OCI-LY7 (cell line): ENCODE measurements at regions of chr1 and their contacts with region 1.

Region 1: DNA sequence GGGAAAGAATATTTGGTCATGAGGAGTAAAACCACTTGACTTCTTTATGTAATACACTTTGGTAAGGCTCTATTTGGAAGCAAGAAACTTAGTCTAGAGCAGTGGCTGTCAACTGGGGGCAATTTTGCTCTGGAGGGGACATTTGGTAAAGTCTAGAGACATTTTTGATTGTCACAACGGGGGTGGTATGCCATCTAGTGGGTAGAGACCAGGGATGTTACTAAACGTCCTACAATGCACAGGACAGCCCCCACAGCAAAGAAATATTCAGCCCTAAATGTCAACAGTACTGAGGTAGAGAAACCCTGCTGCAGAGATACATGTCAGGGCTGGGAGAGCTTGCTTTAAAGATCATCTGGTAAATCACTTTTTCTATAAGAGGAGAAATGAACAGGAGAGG is 13.5 kb downstream of the FUCA1 start:
- DNase-seq: peak; percentile 54
- H3K4me3 ChIP-seq: no peak overlapping the region
- H3K27ac ChIP-seq: no peak overlapping the region
- H3K4me1 ChIP-seq: no peaks in the 10 kb centered on the region
- CTCF ChIP-seq: peak; percentile 77

Region 2: DNA sequence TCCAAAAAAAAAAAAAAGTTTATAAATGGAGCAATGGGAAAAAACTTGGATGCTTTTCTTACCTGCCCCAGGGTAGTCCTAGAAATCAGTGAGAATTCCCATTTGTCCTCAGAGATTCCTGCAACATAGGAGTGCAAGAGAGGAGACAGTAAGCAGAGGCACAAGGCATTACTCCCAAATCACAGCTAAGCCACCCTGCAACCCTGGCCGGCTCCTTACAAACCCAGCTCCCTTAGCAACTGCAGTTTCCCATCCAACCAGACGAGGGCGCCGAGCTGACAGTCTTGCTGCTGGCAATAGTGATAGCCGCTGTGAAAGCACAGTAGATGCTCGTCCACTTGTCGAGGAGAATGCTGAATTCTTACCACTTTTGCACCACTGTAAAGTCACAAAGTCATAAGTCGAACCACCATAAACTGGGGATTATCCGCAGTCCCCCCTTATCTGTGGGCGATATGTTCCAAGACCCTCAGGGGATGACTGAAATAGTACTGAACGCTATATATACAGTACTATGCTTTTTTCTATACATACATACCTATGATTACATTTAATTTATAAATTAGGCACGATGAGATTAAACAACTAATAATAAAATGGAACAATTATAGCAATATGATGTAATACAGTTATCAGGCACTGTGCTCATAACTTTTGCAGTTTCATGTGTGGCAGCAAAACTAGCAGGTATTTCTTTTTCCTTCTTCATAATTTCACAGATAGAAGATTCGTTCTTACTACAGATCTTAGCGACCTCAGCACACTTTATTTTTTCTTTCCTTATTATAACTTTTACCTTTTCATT is 82.3 kb before region 1 on chr1:
- CTCF ChIA-PET with region 1: no interaction called
- POLR2A ChIA-PET with region 1: interaction called, 3 read pairs
- intact Hi-C with region 1: loop called (anchors 1 kb)
- DNase-seq: peak; percentile 87
- H3K4me3 ChIP-seq: no peak overlapping the region
- H3K27ac ChIP-seq: no peak overlapping the region
- H3K4me1 ChIP-seq: peaks cover 22% of the 10 kb centered on the region
- CTCF ChIP-seq: peak; percentile 98

Region 3: GRCh38 chr1:23809751-23810171 is 44.8 kb before region 1 on chr1:
- CTCF ChIA-PET with region 1: interaction called, 3 read pairs
- POLR2A ChIA-PET with region 1: no interaction called
- intact Hi-C with region 1: loop called (anchors 1 kb)
- DNase-seq: peak; percentile 86
- H3K4me3 ChIP-seq: no peak overlapping the region
- H3K27ac ChIP-seq: peak overlapping the region; percentile 25
- H3K4me1 ChIP-seq: peaks cover 41% of the 10 kb centered on the region
- CTCF ChIP-seq: peak; percentile 89